Activated CD4-positive, alpha-beta T cell treated with anti-CD3 and anti-CD28 coated beads for 36 hours (primary cell): ENCODE measurements at regions of chr2 and their contacts with region 1.

Region 1: DNA sequence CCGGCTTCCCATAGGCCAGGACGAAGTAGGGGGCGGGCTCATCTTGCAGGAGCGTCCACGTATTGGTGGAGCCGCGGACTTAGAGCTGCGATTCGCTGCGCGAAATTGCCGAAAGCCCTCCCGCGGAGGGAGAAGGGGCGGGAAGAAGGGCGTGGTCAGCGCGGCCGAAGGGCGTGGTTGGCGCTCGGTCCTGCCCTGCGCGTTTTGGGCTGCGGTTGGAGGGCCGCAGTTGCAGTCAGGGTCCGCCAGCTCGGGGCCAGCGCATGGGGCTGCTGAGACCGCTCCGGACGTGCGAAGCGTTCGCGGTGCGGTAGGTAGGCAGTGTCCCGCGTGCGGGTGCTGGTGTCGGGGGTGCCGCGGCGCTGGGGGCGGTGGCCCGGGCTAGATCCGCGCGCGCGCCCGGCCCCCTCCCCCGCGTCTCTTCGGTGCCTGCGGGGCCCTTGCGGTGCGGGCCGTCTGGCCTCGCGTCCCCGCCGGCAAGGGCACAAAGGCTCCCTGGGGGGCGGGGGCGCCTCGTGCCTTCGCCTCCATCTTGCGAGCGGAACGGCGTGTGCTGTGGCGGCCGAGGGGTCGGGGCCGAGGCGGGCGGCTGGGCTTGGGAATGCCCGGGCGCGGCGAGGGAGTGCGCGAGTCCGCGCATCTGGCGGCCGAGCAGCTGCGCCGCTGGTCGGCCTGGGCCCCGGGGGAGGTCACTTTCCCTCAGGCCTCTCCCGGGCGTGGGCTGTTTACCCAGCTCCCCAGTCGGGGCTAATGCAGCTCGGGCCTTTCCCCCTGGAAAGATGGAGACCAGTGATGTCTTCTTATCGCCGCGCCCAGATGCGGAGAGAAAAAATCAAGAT is at the start of gene CEP68:
- DNase-seq: peak; percentile 98
- ATAC-seq: peak; percentile 94
- H3K4me3 Mint-ChIP-seq: peak within 1 kb of the TSS; percentile 93
- H3K27ac Mint-ChIP-seq: peak within 1 kb of the TSS; percentile 84
- H3K4me1 Mint-ChIP-seq: peaks cover 55% of the 10 kb centered on the region
- H3K27me3 Mint-ChIP-seq: no peaks in the 10 kb centered on the region
- total RNA-seq, gene CEP68: 4.9 to 6.0 TPM

Region 2: GRCh38 chr2:64982311-64982857 is 74.0 kb before region 1 on chr2:
- CTCF ChIA-PET with region 1: no interaction called
- POLR2A ChIA-PET with region 1: no interaction called
- intact Hi-C with region 1: loop called in 1 of 2 experiments (anchors 1 kb)
- DNase-seq: peak; percentile 31
- ATAC-seq: peak; percentile 81
- H3K4me3 Mint-ChIP-seq: no peak overlapping the region
- H3K27ac Mint-ChIP-seq: peak overlapping the region; percentile 52
- H3K4me1 Mint-ChIP-seq: peaks cover 30% of the 10 kb centered on the region
- H3K27me3 Mint-ChIP-seq: no peaks in the 10 kb centered on the region

Region 3: DNA sequence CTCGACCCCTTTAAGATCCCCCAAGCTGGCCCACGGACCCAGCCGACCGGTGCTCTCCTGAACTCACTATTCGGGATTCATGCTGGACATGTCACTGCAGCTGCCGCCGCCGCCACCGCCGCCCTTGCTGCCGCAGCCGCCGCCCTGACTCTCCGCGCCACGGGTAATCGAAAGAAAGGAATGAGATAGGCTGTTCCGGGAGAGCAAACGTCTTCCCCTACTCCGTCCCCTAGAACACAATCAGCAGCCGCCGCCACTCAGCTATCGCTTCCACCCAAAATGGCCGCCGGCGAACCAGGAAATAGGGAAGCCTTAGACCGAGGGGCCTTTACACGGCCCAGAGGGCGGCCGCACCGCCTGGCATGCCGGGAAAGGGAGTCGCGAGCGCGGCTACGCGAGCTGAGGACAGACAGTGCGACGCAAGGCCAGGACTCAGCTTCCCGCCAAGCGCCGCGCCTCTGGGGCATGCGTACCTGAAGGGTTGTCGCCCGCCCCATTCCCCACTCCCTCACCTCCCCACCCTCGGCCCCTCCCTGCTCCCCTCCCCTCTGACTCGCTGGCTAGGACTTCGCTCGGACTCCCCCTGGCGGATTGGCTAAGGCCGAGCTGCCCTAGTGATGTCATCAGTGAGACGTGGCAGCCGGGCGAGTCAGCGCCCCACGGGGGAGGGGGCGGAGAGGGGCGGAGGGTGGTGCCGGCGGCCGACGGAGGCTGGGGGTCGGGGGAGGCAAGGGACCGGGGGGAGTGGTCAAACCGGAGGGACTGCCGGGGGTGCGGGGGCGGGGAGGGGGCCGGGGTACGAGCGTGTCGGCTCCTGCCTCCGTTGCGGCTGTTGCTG is 73.6 kb after region 1 on chr2 and contains the start of gene RAB1A:
- CTCF ChIA-PET with region 1: interaction called, 3 read pairs
- POLR2A ChIA-PET with region 1: interaction called, 10 read pairs
- intact Hi-C with region 1: loop called (anchors 1 kb)
- DNase-seq: peak; percentile 100
- ATAC-seq: peak; percentile 95
- H3K4me3 Mint-ChIP-seq: peak within 1 kb of the TSS; percentile 100
- H3K27ac Mint-ChIP-seq: peak within 1 kb of the TSS; percentile 100
- H3K4me1 Mint-ChIP-seq: peaks cover 30% of the 10 kb centered on the region
- H3K27me3 Mint-ChIP-seq: no peaks in the 10 kb centered on the region
- total RNA-seq, gene RAB1A: 77.1 to 84.8 TPM

Region 4: GRCh38 chr2:65169760-65170136 is 113.3 kb after region 1 on chr2:
- CTCF ChIA-PET with region 1: interaction called, 18 read pairs
- POLR2A ChIA-PET with region 1: no interaction called
- intact Hi-C with region 1: no loop called
- DNase-seq: no peak
- ATAC-seq: no peak
- H3K4me3 Mint-ChIP-seq: no peak overlapping the region
- H3K27ac Mint-ChIP-seq: no peak overlapping the region
- H3K4me1 Mint-ChIP-seq: no peaks in the 10 kb centered on the region
- H3K27me3 Mint-ChIP-seq: no peaks in the 10 kb centered on the region

Region 5: GRCh38 chr2:65227425-65228262 is 171.2 kb after region 1 on chr2 and contains the start of gene ACTR2:
- CTCF ChIA-PET with region 1: interaction called, 5 read pairs
- POLR2A ChIA-PET with region 1: interaction called, 8 read pairs
- intact Hi-C with region 1: loop called (anchors 1 to 2 kb)
- DNase-seq: peak; percentile 97
- ATAC-seq: peak; percentile 96
- H3K4me3 Mint-ChIP-seq: peak within 1 kb of the TSS; percentile 95
- H3K27ac Mint-ChIP-seq: peak within 1 kb of the TSS; percentile 98
- H3K4me1 Mint-ChIP-seq: peaks cover 30% of the 10 kb centered on the region
- H3K27me3 Mint-ChIP-seq: no peaks in the 10 kb centered on the region
- total RNA-seq, gene ACTR2: 326 to 388 TPM

Region 6: GRCh38 chr2:65501074-65501473 is 444.6 kb after region 1 on chr2:
- CTCF ChIA-PET with region 1: no interaction called
- POLR2A ChIA-PET with region 1: no interaction called
- intact Hi-C with region 1: no loop called
- DNase-seq: no peak
- ATAC-seq: no peak
- H3K4me3 Mint-ChIP-seq: no peak overlapping the region
- H3K27ac Mint-ChIP-seq: no peak overlapping the region
- H3K4me1 Mint-ChIP-seq: no peaks in the 10 kb centered on the region
- H3K27me3 Mint-ChIP-seq: no peaks in the 10 kb centered on the region

Region 7: DNA sequence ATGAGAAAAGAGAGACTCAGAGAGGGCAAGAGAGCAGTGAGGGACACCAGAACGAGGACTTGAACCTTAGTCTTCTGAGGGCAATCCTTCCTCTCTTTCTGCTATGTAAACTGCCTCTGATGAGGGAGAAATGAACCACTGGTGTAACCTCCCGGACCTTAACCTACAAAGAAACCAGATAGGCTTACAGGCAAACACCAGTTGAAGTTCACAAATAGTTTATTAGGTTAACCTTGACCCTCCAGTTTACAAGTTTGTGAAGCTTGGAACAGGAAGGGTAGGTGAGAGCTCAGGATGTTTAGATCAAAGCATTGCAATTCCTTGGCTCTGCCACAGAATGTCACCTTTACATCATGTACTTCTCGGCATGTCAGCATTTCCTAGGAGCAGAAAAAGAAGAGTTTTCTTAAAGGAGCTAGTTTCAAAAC is 862.3 kb after region 1 on chr2:
- CTCF ChIA-PET with region 1: no interaction called
- POLR2A ChIA-PET with region 1: no interaction called
- intact Hi-C with region 1: no loop called
- DNase-seq: no peak
- ATAC-seq: no peak
- H3K4me3 Mint-ChIP-seq: no peak overlapping the region
- H3K27ac Mint-ChIP-seq: no peak overlapping the region
- H3K4me1 Mint-ChIP-seq: no peaks in the 10 kb centered on the region
- H3K27me3 Mint-ChIP-seq: no peaks in the 10 kb centered on the region